Activated CD4-positive, alpha-beta T cell treated with anti-CD3 and anti-CD28 coated beads, Interleukin-2, amount 10 ng/mL, durations not matched to agents 24 days and 14 days (primary cell): ENCODE measurements at regions of chr11 and their contacts with region 1.

Region 1: GRCh38 chr11:8964324-8965320 is at the start of gene TMEM9B:
- DNase-seq: peak; percentile 95
- H3K4me3 Mint-ChIP-seq: peak within 1 kb of the TSS; percentile 100
- H3K27ac Mint-ChIP-seq: peak within 1 kb of the TSS; percentile 95
- H3K4me1 Mint-ChIP-seq: peaks cover 30% of the 10 kb centered on the region
- H3K27me3 Mint-ChIP-seq: no peaks in the 10 kb centered on the region
- total RNA-seq, gene TMEM9B: 25.2 and 26.5 TPM in 2 replicates

Region 2: GRCh38 chr11:8225589-8226036 is 739.0 kb before region 1 on chr11:
- intact Hi-C with region 1: loop called (anchors 10 kb)
- DNase-seq: peak; percentile 88
- H3K4me3 Mint-ChIP-seq: no peak overlapping the region
- H3K27ac Mint-ChIP-seq: no peak overlapping the region
- H3K4me1 Mint-ChIP-seq: peaks cover 1% of the 10 kb centered on the region
- H3K27me3 Mint-ChIP-seq: no peaks in the 10 kb centered on the region

Region 3: DNA sequence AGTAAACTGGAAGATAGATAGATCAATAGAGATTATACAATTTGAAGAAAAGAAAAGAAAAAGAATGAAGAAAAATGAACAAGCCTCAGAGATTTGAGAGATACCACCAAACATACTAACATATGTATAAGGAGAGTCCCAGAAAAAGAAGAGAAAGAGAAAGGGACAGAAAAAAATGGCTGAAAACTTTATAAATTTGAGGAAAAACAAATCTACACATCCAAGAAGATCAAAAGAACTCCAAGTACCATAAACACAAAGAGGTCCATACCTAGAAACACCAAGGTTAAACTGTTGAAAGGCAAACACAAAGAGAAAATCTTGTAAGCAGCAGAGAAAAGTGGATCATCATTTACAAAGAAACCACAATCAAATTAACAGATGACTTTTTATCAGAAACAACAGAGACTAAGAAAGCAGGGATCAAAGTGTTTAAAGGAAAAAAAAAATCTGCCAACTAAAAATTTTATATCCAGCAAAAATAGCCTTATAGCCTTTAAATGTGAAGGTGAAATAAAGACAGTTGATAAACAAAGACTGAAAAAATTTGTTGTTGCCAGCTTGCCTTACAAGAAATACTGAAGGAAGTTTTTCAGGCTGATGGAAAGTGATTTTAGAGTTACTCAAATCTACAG is 65.4 kb before region 1 on chr11:
- intact Hi-C with region 1: no loop called
- DNase-seq: no peak
- H3K4me3 Mint-ChIP-seq: no peak overlapping the region
- H3K27ac Mint-ChIP-seq: no peak overlapping the region
- H3K4me1 Mint-ChIP-seq: no peaks in the 10 kb centered on the region
- H3K27me3 Mint-ChIP-seq: peaks cover 15% of the 10 kb centered on the region

Region 4: DNA sequence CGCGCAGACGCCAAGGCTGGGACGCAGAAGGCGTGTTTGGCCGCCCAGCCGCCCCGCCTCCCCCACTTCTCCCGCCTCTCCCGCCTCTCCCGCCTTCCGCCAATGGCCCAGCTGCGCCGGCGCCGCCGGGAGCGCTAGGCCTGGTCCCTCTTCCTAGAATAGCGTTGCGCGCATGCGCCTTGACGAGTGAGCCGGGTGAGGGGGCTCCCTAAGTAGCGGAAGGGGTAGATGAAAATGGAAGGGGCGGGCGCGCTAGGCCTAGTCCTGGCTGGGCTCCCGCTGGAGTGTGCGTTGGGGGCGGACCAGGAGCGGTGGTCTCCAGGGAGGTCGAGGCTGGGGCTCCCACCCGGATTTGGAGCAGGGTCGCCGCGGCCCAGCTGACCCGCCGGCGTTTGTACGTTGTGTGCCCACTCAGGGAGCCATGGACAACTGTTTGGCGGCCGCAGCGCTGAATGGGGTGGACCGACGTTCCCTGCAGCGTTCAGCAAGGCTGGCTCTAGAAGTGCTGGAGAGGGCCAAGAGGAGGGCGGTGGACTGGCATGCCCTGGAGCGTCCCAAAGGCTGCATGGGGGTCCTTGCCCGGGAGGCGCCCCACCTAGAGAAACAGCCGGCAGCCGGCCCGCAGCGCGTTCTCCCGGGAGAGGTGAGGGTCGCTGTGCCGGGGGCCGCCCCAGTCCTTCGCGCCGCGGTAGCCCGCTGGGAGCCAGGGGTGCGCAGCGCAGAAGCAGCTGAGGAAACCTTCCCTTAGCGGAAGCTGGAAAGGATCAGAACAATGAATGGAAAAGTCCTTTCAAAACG is 53.4 kb before region 1 on chr11 and contains the start of gene AKIP1:
- intact Hi-C with region 1: loop called (anchors 1 kb)
- DNase-seq: peak; percentile 94
- H3K4me3 Mint-ChIP-seq: peak within 1 kb of the TSS; percentile 89
- H3K27ac Mint-ChIP-seq: peak within 1 kb of the TSS; percentile 87
- H3K4me1 Mint-ChIP-seq: peaks cover 39% of the 10 kb centered on the region
- H3K27me3 Mint-ChIP-seq: peaks cover 14% of the 10 kb centered on the region
- total RNA-seq, gene AKIP1: 25.1 and 31.7 TPM in 2 replicates

Region 5: DNA sequence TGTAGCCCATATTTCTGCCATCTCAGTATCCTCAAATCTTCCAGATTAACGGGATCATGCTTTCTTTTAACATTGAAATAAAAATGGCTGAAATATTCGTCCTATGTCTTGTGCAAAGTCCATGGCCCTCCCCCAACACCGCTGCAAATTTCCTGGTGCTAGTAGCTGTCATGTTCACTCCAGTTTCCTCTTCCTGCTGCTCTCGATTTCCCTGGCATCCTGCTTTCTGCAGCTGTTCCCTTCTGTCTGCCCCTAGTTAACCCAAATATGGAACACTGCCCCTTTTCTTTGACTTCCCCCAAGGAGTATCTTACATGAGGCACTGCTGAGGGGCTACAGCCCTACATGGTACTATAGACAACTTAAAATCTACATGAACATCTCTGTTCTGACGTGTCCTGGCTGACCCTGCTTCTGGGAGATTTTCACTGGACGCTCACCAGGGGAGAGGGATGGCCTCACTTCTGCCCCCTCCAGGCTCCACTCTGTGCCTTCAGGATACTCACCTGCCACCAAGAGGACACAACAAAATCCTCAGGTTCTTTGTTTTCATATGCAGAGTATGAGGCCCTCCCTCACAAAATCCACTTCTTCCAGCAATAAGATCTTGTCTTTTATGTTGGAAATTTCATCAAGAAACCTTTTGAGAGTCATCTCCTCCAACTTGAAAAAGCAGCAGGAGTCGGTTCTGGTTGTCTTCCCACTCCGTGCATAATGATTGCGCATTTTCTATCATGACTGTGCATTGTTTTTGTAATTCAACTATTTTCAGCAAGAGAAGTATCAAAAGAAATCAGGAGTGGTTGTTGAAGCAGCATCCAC is 156.3 kb after region 1 on chr11:
- intact Hi-C with region 1: no loop called
- DNase-seq: no peak
- H3K4me3 Mint-ChIP-seq: no peak overlapping the region
- H3K27ac Mint-ChIP-seq: no peak overlapping the region
- H3K4me1 Mint-ChIP-seq: peaks cover 3% of the 10 kb centered on the region
- H3K27me3 Mint-ChIP-seq: no peaks in the 10 kb centered on the region

Region 6: DNA sequence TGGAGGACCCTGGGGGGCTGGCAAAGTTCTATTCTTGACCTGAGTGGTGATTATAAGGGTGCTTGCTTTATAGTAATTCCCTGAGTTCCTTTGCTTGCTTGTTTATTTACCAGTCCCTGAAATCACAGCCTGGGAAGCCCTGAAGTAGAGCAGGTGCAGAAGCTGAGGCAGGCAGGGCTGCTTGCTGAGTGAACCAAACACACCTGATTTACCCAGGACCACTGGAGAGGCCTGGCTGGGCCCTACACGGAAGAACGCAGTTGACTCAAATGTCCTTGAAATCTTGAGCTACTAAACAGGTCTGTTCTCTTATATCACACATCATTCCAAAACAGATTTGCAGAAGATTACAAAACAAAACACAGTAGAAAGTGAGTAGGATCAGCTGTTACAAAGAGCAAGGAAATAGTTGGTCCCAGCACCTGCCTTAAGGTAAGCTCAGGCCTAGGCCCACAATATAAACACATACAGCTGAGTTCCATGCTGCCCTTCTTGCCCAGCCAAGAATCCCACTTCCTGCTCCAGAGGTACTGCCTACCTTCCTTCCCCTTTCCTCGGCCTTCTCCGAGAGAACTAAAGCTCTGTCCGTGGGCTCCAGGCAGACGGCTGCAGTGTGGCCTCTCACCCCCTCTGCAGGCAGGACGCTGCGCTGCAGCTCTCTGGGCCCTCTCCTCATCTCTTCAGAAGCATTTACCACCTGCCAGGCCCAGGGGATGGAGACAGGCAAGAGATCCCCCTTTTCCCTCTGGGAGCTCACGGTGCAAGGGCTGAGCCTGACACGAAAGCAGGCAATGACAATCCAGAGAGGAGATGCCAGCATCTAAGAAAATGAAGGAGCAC is 172.9 kb after region 1 on chr11:
- intact Hi-C with region 1: loop called (anchors 5 kb)
- DNase-seq: peak; percentile 92
- H3K4me3 Mint-ChIP-seq: no peak overlapping the region
- H3K27ac Mint-ChIP-seq: peak overlapping the region; percentile 80
- H3K4me1 Mint-ChIP-seq: peaks cover 29% of the 10 kb centered on the region
- H3K27me3 Mint-ChIP-seq: no peaks in the 10 kb centered on the region

Region 7: DNA sequence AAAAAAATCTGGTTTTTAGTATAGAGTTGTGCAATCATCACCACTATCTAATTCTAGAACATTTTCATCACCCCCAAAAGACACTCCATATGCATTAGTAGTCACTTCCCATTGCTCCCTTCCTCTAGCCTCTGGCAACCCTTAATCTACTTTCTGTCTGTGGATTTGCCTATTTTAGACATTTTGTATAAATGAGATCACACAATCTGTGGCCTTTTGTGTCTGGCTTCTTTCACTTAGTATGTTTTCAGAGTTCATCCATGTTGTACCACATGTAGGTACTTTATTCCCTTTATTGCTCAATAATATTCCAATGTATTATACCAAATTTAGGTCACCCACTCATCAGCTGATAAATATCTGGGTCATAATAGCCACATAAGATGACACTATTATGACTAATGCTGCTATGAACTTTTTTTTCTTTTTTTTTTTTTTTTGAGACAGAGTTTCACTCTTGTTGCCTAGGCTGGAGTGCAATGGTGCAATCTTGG is 194.3 kb after region 1 on chr11:
- intact Hi-C with region 1: no loop called
- DNase-seq: no peak
- H3K4me3 Mint-ChIP-seq: no peak overlapping the region
- H3K27ac Mint-ChIP-seq: peak overlapping the region; percentile 4
- H3K4me1 Mint-ChIP-seq: peaks cover 16% of the 10 kb centered on the region
- H3K27me3 Mint-ChIP-seq: no peaks in the 10 kb centered on the region

Region 8: GRCh38 chr11:9573052-9573774 is 608.6 kb after region 1 on chr11 and contains the start of gene WEE1:
- intact Hi-C with region 1: loop called (anchors 10 kb)
- DNase-seq: peak; percentile 100
- H3K4me3 Mint-ChIP-seq: peak within 1 kb of the TSS; percentile 96
- H3K27ac Mint-ChIP-seq: peak within 1 kb of the TSS; percentile 93
- H3K4me1 Mint-ChIP-seq: peaks cover 30% of the 10 kb centered on the region
- H3K27me3 Mint-ChIP-seq: peaks cover 6% of the 10 kb centered on the region
- total RNA-seq, gene WEE1: 55.5 and 57.7 TPM in 2 replicates